Heart right ventricle (tissue), 16 donors: ENCODE measurements at regions of chr15 and their contacts with region 1.

Region 1: DNA sequence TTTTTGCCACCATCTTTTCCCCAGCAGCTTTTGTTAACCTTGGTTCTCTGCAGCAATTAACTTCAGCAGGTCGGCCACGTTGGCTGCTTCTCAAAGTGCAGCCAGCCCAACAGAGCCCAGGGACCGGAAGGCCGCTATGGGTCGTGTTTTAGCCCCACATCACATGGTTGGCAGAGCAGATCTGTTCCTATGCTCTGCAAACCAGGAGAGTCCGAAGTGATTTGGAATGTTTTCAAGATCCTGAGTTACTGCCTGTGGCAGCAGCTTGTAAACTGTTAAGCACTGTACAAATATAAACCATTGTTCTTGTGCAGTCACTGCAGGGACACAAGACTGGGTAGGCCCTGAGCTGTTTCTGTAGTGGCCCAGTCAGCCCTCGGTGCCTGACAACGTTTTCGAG is 69.6 kb upstream of the MYZAP start:
- DNase-seq: peak in 1 of 2 donors; percentile 31
- ATAC-seq: peak; percentile 26 to 89 (median 79)
- H3K4me3 ChIP-seq: no peak overlapping the region
- H3K27ac ChIP-seq: peak overlapping the region in 8 of 10 donors; percentile 26 to 72 (median 59)
- H3K4me1 ChIP-seq: peaks cover 0 to 38% (median 3%) of the 10 kb centered on the region in 9 donors
- H3K27me3 ChIP-seq: no peaks in the 10 kb centered on the region
- CTCF ChIP-seq: no peak

Region 2: GRCh38 chr15:57462381-57462780 is 59.8 kb before region 1 on chr15:
- intact Hi-C with region 1: no loop called
- DNase-seq: no peak
- ATAC-seq: no peak
- H3K4me3 ChIP-seq: no peak overlapping the region
- H3K27ac ChIP-seq: no peak overlapping the region
- H3K4me1 ChIP-seq: peaks cover 0 to 17% (median 6%) of the 10 kb centered on the region in 9 donors
- H3K27me3 ChIP-seq: peaks cover 0 to 3% (median 0%) of the 10 kb centered on the region in 7 donors
- CTCF ChIP-seq: peak in 6 of 9 donors; percentile 15 to 46 (median 32)

Region 3: DNA sequence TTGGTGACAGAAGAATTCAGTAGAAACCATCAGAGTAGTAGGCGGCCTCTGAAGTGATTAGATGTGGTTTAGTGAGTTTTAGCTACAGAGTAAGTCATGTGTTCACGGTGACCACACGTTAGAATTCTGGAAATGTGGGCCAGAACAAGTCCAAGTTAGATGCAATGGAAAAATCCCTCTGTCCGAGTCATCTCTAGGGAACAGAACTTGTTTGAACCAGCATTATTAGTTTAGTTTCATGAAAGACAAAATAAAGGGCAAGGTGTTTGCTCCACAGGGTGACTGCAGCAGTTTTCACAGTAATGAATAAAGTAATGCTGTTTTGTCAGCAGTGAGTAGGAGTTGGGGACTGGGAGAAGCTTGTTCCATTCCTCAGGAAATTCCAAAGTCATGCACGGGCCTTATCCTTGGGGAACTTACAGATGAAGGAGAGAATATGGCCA is 45.6 kb before region 1 on chr15:
- intact Hi-C with region 1: loop called in 1 of 10 experiments (anchors 1 kb)
- DNase-seq: no peak
- ATAC-seq: peak; percentile 26 to 76 (median 66)
- H3K4me3 ChIP-seq: no peak overlapping the region
- H3K27ac ChIP-seq: peak overlapping the region in 4 of 10 donors; percentile 27 to 60 (median 44)
- H3K4me1 ChIP-seq: peaks cover 0 to 21% (median 0%) of the 10 kb centered on the region in 9 donors
- H3K27me3 ChIP-seq: no peaks in the 10 kb centered on the region
- CTCF ChIP-seq: no peak